ENCODE measurements at regions of chr2 and their contacts with region 1.

Region 1: DNA sequence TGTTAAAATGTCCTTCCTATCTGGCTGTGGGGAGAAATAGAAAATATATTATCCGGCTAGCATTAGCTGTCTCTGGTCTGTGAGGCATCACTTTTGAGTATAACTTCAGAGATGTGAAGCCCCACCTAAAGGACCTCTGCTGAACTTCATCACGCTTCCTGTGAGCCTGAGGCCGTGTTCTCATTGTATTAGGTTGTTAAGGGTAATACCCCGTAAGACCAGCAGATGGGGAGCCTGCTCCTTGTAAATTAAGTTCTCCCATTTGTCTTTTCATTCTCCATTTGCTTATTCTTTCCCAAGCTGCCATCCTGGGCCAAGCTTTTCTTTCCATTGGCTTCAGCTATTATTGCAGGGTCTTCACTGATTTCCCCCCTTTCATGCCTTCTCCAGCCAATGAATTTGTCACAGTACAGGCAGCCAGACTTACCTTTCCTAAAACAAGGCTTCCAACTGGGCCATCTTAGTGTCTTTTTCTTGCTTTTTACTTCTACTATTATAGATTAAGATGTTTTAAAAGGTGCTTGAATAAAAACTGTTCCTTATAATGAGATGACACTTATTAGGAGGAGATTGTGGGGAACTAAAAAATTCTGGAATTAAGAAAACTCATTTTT is 12.4 kb downstream of the NIF3L1 start:
- DNase-seq: peak; percentile 81
- H3K4me3 ChIP-seq: no peak overlapping the region
- H3K27ac ChIP-seq: no peak overlapping the region
- H3K27me3 ChIP-seq: no peaks in the 10 kb centered on the region
- CTCF ChIP-seq: peak; percentile 84

Region 2: DNA sequence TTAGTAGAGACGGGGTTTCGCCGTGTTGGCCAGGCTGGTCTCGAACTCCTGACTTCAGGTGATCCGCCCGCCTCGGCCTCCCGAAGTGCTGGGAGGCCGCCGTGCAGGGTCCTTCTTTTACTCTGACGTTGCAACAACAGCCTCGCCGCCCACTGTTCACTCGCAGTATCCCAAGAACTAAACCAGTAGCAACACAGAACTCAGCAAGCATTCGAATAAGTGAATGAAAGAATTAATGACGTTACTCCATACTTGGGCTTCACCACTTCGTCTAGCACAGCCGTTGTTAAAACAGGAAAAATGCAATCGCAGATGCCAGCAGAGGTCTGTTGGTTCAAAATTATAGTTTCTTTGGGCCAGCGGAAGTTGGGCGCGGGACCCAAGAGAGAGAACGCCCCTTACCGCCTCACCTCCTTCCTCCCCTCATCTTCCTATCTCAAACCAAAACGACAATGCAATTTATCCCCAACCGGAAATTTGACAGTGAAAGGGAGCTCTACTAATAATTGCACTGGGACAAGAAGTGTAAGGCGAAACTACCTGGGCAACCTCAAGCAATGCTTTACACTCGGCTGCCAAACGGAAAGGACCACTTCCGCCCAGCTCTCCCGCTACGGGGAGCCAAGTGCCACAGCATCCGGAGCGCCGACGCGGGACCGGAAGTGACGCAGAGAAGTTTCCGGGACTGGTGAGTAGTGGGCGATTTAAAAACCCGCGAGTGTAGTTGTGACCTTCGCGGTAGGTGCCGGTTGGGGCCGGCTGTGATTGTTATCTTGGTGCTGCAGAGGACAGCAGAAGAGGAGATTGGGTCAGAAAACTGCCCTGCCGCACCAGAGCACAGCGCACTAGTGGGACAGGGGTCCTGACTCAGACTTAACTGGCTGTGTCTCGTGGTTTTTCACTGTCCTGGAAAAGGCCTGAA is 12.6 kb before region 1 on chr2 and contains the starts of genes NIF3L1 and PPIL3:
- CTCF ChIA-PET with region 1: interaction called, 11 read pairs
- POLR2A ChIA-PET with region 1: no interaction called
- DNase-seq: peak; percentile 91
- H3K4me3 ChIP-seq: peak within 1 kb of the TSS; percentile 78
- H3K27ac ChIP-seq: peak within 1 kb of the TSS; percentile 93
- H3K27me3 ChIP-seq: no peaks in the 10 kb centered on the region
- CTCF ChIP-seq: no peak
- polyA plus RNA-seq, gene NIF3L1: 36.6 and 38.7 TPM in 2 replicates
- polyA plus RNA-seq, gene PPIL3: 31.0 and 40.8 TPM in 2 replicates

Region 3: DNA sequence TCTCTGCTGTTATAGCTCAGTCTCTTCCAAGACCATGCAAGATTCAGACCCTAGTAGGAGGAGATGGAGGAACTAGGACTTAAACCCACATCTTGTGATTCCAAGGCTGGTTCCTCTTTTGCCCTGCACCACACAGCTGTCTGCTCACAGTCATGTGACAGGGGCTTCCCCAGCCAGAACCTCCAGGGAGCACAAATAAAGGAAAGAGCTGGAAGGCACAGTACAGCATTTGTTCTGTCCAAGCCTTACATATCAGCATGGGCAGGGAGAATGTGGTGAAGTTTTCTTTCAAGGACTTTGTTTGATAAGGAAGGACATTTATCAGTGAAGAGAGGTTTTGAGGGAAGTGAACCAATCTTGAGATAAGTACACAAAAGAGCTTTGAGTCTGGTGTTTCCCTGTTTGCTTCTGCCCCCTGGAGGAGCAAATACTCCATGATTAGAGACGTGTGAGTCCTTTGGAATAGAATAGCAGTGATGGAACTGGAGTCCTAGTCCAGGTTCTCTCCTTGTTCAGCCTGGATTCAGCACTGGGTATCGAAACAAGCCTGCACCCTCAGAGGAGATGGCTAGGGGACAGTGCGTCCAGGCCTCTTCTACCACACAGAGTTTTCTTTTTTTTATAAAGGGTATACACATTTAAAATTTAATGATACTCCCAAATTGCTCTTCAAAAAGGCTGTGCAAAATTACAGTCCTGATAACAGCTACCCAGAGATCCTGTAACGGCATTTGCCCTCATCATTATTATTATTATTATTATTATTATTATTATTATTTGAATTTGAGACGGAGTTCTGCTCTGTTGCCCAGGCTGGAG is 256.8 kb after region 1 on chr2:
- CTCF ChIA-PET with region 1: interaction called, 36 read pairs
- POLR2A ChIA-PET with region 1: no interaction called
- DNase-seq: no peak
- H3K4me3 ChIP-seq: no peak overlapping the region
- H3K27ac ChIP-seq: peak overlapping the region; percentile 33
- H3K27me3 ChIP-seq: no peaks in the 10 kb centered on the region
- CTCF ChIP-seq: peak; percentile 83

Region 4: GRCh38 chr2:201176081-201176481 is 274.5 kb after region 1 on chr2:
- CTCF ChIA-PET with region 1: interaction called, 36 read pairs
- POLR2A ChIA-PET with region 1: no interaction called
- DNase-seq: no peak
- H3K4me3 ChIP-seq: no peak overlapping the region
- H3K27ac ChIP-seq: no peak overlapping the region
- H3K27me3 ChIP-seq: no peaks in the 10 kb centered on the region
- CTCF ChIP-seq: no peak

Region 5: GRCh38 chr2:201182650-201183364 is 281.2 kb after region 1 on chr2 and contains the start of gene CASP10:
- CTCF ChIA-PET with region 1: interaction called, 36 read pairs
- POLR2A ChIA-PET with region 1: no interaction called
- DNase-seq: no peak
- H3K4me3 ChIP-seq: peak within 1 kb of the TSS; percentile 45
- H3K27ac ChIP-seq: no peak within 1 kb of the TSS
- H3K27me3 ChIP-seq: peaks cover 3% of the 10 kb centered on the region
- CTCF ChIP-seq: peak; percentile 43
- polyA plus RNA-seq, gene CASP10: 1.5 and 2.6 TPM in 2 replicates

Region 6: GRCh38 chr2:201216918-201217317 is 315.4 kb after region 1 on chr2:
- CTCF ChIA-PET with region 1: no interaction called
- POLR2A ChIA-PET with region 1: no interaction called
- DNase-seq: no peak
- H3K4me3 ChIP-seq: no peak overlapping the region
- H3K27ac ChIP-seq: no peak overlapping the region
- H3K27me3 ChIP-seq: no peaks in the 10 kb centered on the region
- CTCF ChIP-seq: no peak

Measured in AG04450 (cell line).